ENCODE measurements at regions of chr4 and their contacts with region 1.

Region 1: DNA sequence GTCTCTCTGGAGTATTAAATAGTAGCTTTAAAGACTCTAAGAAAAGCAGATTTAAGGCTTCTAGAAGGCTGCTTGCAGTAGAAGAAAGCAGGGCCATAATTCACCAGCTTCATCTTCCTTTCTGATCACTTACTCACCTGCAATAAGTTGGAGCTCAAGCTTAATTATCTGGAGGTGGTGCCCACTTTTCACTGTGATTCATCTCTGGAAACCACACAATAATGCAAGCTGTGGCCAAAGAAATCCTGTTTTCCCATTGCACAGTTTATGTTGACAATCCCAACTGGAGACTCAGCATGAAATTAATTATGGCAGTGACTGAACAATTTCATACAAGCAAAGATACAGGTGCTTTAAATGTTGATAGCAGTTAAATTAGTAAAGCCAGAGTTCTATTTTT is 14.7 kb downstream of the CWH43 start:
- DNase-seq: no peak

Region 2: GRCh38 chr4:47733302-47734175 is 1267.3 kb before region 1 on chr4:
- intact Hi-C with region 1: loop called in 1 of 2 experiments (anchors 5 kb)
- DNase-seq: no peak

Region 3: DNA sequence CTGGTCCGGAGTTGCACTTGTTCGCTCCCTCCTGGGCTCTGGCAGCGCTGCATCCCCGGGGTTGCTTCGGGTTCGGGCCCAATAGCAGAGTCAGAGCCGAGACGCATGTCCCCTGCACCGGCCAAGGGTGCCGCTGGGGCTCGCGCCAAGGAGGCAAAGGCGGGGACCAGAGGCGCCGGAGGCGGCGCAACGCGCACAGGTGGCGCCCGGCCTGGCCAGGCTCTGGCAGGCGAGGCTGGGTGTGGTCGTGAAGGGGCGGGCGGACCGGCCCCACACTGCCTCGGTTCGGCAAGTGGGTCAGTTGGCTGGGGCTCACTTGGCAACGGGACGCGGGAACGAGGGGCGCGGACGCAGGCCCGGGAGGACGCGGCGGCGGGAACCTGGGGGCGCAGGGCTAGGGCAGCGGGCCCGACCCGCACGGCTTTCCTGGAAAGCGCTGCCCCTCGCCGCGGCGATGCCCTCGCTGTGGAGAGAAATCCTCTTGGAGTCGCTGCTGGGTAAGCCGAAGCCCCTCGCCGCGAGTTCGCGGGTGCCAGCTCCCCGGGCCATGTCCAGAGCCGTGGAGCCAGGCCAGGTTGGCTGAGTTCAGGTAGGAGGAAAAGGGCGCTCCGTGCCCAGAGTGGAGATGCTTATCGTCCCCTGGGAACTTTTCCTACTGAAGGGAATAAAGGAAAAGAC is 14.7 kb before region 1 on chr4 and contains the start of gene CWH43:
- intact Hi-C with region 1: no loop called
- DNase-seq: no peak
- total RNA-seq, gene CWH43: not detected

Measured in posterior vena cava (tissue), 2 donors.